ENCODE measurements at regions of chr11 and their contacts with region 1.

Region 1: GRCh38 chr11:47426061-47426956 is at the start of gene PSMC3:
- DNase-seq: peak; percentile 56
- H3K4me3 ChIP-seq: peak within 1 kb of the TSS; percentile 98
- CTCF ChIP-seq: no peak

Region 2: DNA sequence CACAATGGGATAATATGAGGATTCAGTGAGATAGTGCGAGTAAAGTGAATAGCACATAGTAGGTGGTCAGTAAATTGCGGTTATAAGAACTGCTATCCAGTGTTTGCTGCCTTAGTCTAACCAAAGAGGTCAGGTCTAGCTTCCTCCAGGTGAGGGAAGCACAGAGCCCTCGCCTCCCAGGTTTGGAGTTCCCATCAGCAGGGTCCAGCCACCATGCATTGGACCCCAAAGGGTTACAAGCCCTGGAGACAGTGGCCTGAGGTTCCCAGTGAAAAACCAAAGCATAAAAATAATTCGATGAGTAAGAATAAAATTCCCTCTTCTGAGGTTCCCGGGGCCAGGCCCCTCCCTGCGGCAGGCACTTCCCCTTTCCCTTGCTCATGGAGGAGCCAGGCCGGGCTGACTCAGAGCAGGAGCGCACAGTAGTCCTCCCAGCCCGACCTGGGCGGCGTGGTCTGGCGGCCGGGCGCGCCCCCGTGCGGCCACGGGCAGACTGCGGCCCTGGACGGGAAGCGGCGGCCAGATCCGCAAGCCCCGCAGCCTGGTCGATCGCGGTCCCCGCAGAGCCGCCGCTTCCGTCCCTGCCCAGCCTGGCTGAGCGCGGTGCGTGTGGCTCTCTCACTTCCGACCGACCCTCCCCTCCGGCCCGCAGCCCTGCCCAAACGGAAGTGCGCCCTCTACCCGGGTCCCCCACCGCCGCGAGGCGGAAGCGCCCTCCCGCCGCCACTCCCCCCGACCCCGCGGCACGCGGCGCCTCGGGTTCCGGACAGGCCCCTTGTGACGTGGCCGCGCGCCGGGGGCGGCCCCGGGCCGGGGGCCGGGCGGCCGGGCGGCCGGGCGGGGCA is 18.3 kb before region 1 on chr11 and contains the start of gene SLC39A13:
- CTCF ChIA-PET with region 1: interaction called, 66 read pairs
- POLR2A ChIA-PET with region 1: interaction called, 3 read pairs
- DNase-seq: peak; percentile 71
- H3K4me3 ChIP-seq: peak within 1 kb of the TSS; percentile 95
- CTCF ChIP-seq: peak; percentile 81

Region 3: GRCh38 chr11:47415949-47416472 is 10.3 kb before region 1 on chr11:
- CTCF ChIA-PET with region 1: interaction called, 66 read pairs
- POLR2A ChIA-PET with region 1: interaction called, 38 read pairs
- DNase-seq: no peak
- H3K4me3 ChIP-seq: no peak overlapping the region; the same call in 1 of the 2 replicates
- CTCF ChIP-seq: no peak

Region 4: GRCh38 chr11:47464483-47464882 is 38.2 kb after region 1 on chr11:
- CTCF ChIA-PET with region 1: no interaction called
- POLR2A ChIA-PET with region 1: no interaction called
- DNase-seq: no peak
- H3K4me3 ChIP-seq: no peak overlapping the region
- CTCF ChIP-seq: no peak